ENCODE measurements at regions of chr12 and their contacts with region 1.

Region 1: GRCh38 chr12:14995583-14996425 is 23.0 kb downstream of the PDE6H start:
- DNase-seq: no peak
- ATAC-seq: peak in 5 of 8 donors; percentile 16 to 67 (median 60)
- H3K4me3 ChIP-seq: no peak overlapping the region
- H3K27ac ChIP-seq: peak overlapping the region in 1 of 10 donors; percentile 23
- H3K4me1 ChIP-seq: peaks cover 0 to 25% (median 4%) of the 10 kb centered on the region in 9 donors
- H3K27me3 ChIP-seq: no peaks in the 10 kb centered on the region
- CTCF ChIP-seq: peak; percentile 64 to 85 (median 74)

Region 2: GRCh38 chr12:14643251-14643650 is 352.6 kb before region 1 on chr12:
- intact Hi-C with region 1: loop called in 2 of 10 experiments (anchors 10 kb)
- DNase-seq: no peak
- ATAC-seq: no peak
- H3K4me3 ChIP-seq: no peak overlapping the region
- H3K27ac ChIP-seq: peak overlapping the region in 1 of 10 donors; percentile 15
- H3K4me1 ChIP-seq: peaks cover 0 to 27% (median 6%) of the 10 kb centered on the region in 9 donors
- H3K27me3 ChIP-seq: no peaks in the 10 kb centered on the region
- CTCF ChIP-seq: no peak

Region 3: GRCh38 chr12:14723763-14724162 is 272.0 kb before region 1 on chr12:
- intact Hi-C with region 1: loop called in 8 of 10 experiments (anchors 5 to 10 kb)
- DNase-seq: peak; percentile 26 to 58
- ATAC-seq: peak; percentile 67 to 98 (median 84)
- H3K4me3 ChIP-seq: no peak overlapping the region
- H3K27ac ChIP-seq: no peak overlapping the region
- H3K4me1 ChIP-seq: no peaks in the 10 kb centered on the region
- H3K27me3 ChIP-seq: no peaks in the 10 kb centered on the region
- CTCF ChIP-seq: peak; percentile 41 to 76 (median 65)

Region 4: DNA sequence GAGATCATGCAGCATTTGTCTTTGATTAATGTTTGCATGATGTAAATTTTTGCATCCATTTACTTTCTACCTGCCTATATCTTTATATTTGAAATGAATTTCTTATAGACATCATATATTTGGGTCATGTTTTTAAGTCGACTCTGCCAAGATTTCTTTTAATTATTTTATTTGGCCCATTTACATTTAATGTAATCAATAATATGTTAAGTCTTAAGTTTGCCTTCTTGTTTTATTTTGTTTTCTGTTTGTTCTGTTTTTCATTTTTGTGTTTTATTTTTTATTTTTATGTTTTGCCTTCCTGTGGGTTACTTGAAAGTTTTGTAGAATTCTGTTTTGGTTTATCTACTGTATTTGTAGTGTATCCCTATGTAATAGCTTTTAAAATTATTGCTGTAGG is 266.2 kb before region 1 on chr12:
- intact Hi-C with region 1: loop called in 8 of 10 experiments (anchors 5 to 10 kb)
- DNase-seq: no peak
- ATAC-seq: no peak
- H3K4me3 ChIP-seq: no peak overlapping the region
- H3K27ac ChIP-seq: no peak overlapping the region
- H3K4me1 ChIP-seq: no peaks in the 10 kb centered on the region
- H3K27me3 ChIP-seq: no peaks in the 10 kb centered on the region
- CTCF ChIP-seq: no peak